Heart right ventricle (tissue), 16 donors: ENCODE measurements at regions of chr3 and their contacts with region 1.

Region 1: GRCh38 chr3:17243621-17244020 is 358.9 kb downstream of the PLCL2 start:
- DNase-seq: no peak
- ATAC-seq: no peak
- H3K4me3 ChIP-seq: no peak overlapping the region
- H3K27ac ChIP-seq: no peak overlapping the region
- H3K4me1 ChIP-seq: peaks cover 0 to 10% (median 0%) of the 10 kb centered on the region in 9 donors
- H3K27me3 ChIP-seq: no peaks in the 10 kb centered on the region
- CTCF ChIP-seq: no peak

Region 2: GRCh38 chr3:16950845-16951244 is 292.8 kb before region 1 on chr3:
- intact Hi-C with region 1: no loop called
- DNase-seq: no peak
- ATAC-seq: no peak
- H3K4me3 ChIP-seq: no peak overlapping the region
- H3K27ac ChIP-seq: no peak overlapping the region
- H3K4me1 ChIP-seq: peaks cover 0 to 54% (median 15%) of the 10 kb centered on the region in 9 donors
- H3K27me3 ChIP-seq: no peaks in the 10 kb centered on the region
- CTCF ChIP-seq: no peak

Region 3: GRCh38 chr3:17136136-17136721 is 107.4 kb before region 1 on chr3:
- intact Hi-C with region 1: no loop called
- DNase-seq: peak in 1 of 2 donors; percentile 61
- ATAC-seq: peak; percentile 50 to 83 (median 70)
- H3K4me3 ChIP-seq: no peak overlapping the region
- H3K27ac ChIP-seq: peak overlapping the region; percentile 7 to 83 (median 62)
- H3K4me1 ChIP-seq: peaks cover 0 to 28% (median 6%) of the 10 kb centered on the region in 9 donors
- H3K27me3 ChIP-seq: no peaks in the 10 kb centered on the region
- CTCF ChIP-seq: no peak

Region 4: DNA sequence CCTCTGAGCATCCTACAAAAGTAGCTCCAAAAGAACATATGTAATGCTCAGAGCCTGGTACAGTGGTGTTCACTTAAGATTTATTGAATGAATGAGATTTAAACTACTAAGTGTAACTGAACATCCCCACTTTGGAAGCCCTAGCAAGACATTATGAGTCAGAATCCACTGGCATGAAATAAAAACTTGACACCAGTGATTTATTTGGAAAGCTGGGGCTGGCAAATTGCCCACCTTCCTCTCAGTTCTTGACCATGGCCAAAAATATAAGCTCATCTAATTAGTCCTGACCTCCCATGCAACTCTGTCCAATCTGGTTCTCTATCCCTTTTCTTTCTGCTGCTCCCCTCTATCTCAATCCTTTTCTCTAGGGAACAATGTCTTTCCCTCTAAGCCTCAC is 59.2 kb after region 1 on chr3:
- intact Hi-C with region 1: no loop called
- DNase-seq: peak in 1 of 2 donors; percentile 19
- ATAC-seq: peak in 3 of 8 donors; percentile 29 to 37 (median 35)
- H3K4me3 ChIP-seq: no peak overlapping the region
- H3K27ac ChIP-seq: no peak overlapping the region
- H3K4me1 ChIP-seq: peaks cover 0 to 16% (median 6%) of the 10 kb centered on the region in 9 donors
- H3K27me3 ChIP-seq: no peaks in the 10 kb centered on the region
- CTCF ChIP-seq: no peak

Region 5: GRCh38 chr3:17329927-17330326 is 86.3 kb after region 1 on chr3:
- intact Hi-C with region 1: no loop called
- DNase-seq: no peak
- ATAC-seq: no peak
- H3K4me3 ChIP-seq: no peak overlapping the region
- H3K27ac ChIP-seq: no peak overlapping the region
- H3K4me1 ChIP-seq: peaks cover 0 to 8% (median 0%) of the 10 kb centered on the region in 9 donors
- H3K27me3 ChIP-seq: no peaks in the 10 kb centered on the region
- CTCF ChIP-seq: no peak

Region 6: GRCh38 chr3:17619968-17620367 is 376.3 kb after region 1 on chr3:
- intact Hi-C with region 1: loop called in 1 of 10 experiments (anchors 10 kb)
- DNase-seq: no peak
- ATAC-seq: no peak
- H3K4me3 ChIP-seq: no peak overlapping the region
- H3K27ac ChIP-seq: no peak overlapping the region
- H3K4me1 ChIP-seq: no peaks in the 10 kb centered on the region
- H3K27me3 ChIP-seq: no peaks in the 10 kb centered on the region
- CTCF ChIP-seq: no peak